Mammary epithelial cell (primary cell): ENCODE measurements at regions of chr18 and their contacts with region 1.

Region 1: DNA sequence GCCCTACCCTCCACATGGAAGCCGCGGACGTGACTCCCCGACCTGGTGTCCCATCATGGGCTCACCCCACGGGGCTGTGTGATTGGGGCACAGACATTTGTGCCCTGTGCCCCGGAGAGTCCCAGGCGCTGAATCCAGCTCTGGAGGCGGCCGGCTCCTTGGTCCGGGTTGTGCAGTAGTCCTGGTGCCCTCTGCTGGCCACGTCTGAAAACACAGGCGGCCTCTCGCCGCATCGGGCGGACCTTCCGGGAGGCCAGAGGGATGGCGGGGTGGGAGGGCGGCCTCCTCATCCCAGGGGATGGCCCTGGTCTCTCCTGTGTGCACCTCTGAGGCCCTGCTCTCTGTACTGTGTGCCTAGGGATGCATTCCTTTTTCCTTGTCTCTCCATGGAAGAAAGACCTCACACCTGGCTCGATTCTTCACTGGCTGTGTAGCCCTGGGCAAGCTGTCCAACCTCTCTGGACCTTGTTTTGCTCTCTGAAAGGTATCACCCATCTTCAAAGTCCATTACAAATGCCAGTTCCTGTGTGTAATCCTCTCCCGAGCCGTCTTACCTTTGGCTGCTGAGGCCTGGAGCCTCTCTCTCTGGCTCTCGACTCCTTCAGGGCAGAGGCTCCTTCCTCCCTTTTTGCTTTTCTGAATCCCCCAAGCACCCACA is 27.6 kb downstream of the CELF4 start:
- DNase-seq: peak; percentile 37
- H3K4me3 ChIP-seq: no peak overlapping the region
- H3K27ac ChIP-seq: no peak overlapping the region
- H3K4me1 ChIP-seq: no peaks in the 10 kb centered on the region
- H3K27me3 ChIP-seq: peaks cover 13% of the 10 kb centered on the region
- CTCF ChIP-seq: peak; percentile 58 to 85

Region 2: DNA sequence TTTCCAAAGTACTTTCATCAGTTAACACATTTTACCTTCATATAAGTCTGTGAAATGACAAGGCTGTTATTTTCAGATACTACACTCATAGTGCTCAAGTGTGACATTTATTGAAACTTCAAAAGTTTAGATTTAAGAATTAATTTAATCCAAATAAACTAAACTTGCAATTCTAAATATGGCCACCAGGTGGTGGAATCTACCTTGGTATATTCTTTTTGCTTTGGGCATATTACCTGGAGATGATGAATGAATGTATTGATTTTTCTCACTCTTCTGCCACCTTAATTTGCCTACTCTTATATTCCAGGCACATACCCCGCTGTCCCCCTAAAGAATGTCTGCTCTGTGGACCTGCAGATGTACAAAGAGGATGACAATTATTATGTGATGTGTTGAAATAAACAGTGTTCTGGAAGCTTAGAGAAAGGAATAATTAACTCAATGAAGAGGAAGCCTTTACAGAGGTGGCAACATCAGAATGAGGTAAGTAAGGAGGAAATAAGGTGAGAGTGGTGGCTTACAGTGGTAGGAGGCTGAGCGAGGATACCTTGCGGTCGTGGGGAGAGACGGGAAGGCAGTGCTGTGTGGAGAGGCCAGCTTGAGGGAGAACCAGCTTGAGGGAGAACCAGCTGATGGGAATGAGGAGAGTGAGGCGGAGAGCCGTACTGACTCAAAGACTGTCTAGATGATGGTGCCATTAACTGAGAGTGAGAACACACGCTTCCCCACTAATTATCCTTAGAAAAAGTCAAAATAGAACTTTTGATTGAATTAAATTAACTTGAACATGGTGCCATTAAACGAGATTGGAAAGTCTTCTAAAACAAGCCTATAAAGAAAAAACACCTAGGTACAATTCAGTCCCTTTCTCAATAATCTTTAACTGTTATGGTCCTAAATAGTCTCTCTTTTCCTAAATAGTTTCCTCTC is 151.9 kb before region 1 on chr18:
- CTCF ChIA-PET with region 1: no interaction called
- dilution Hi-C with region 1: no loop called
- in situ Hi-C with region 1: no loop called
- intact Hi-C with region 1: loop called (anchors 1 kb)
- DNase-seq: peak; percentile 8
- H3K4me3 ChIP-seq: no peak overlapping the region
- H3K27ac ChIP-seq: no peak overlapping the region
- H3K4me1 ChIP-seq: no peaks in the 10 kb centered on the region
- H3K27me3 ChIP-seq: no peaks in the 10 kb centered on the region
- CTCF ChIP-seq: peak; percentile 59 to 61

Region 3: DNA sequence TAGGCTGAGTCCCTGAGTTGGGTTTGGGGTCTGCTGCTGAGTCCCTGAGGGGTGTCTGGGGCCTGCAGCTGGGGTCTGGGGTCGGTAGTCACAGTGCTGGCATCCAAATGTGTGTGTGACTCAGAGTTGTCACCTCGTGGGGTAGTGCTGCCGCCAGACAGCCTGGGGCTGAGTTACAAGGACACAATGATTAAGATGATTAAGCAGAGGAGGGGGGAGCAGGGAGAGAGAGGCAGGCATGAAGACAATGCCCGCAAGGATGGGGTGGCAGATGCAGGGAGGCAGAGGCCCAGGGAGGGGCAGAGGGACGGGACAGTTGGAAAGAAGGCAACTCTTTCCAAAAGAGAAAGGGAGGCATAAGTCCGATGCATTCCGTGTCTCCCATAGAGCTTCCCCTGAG is 92.6 kb before region 1 on chr18:
- CTCF ChIA-PET with region 1: interaction called, 4 read pairs
- dilution Hi-C with region 1: no loop called
- in situ Hi-C with region 1: no loop called
- intact Hi-C with region 1: loop called (anchors 1 kb)
- DNase-seq: no peak
- H3K4me3 ChIP-seq: no peak overlapping the region
- H3K27ac ChIP-seq: no peak overlapping the region
- H3K4me1 ChIP-seq: no peaks in the 10 kb centered on the region
- H3K27me3 ChIP-seq: no peaks in the 10 kb centered on the region
- CTCF ChIP-seq: no peak

Region 4: DNA sequence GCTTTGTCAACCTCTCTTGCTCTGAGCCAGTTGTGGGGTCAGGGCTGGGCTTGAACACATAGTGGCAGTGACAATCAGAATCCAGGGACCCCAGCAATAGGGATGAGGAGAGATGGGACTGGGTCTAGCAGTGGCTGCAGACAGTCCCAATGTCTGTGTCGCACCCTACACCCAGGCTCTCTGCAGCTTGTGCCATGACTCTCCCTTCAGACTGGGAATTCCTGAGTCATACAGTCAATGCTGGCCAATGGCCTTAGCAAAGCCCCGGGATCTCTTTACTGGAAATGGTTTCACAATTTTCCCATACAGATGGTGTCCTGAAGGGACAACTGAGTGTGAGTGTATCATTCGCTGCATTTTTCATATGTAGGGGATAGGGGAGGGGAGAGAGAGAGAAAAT is 101.8 kb after region 1 on chr18:
- CTCF ChIA-PET with region 1: no interaction called
- dilution Hi-C with region 1: no loop called
- in situ Hi-C with region 1: no loop called
- intact Hi-C with region 1: no loop called
- DNase-seq: no peak
- H3K4me3 ChIP-seq: no peak overlapping the region
- H3K27ac ChIP-seq: no peak overlapping the region
- H3K4me1 ChIP-seq: peaks cover 5% of the 10 kb centered on the region
- H3K27me3 ChIP-seq: no peaks in the 10 kb centered on the region
- CTCF ChIP-seq: no peak